ENCODE measurements at regions of chr7 and their contacts with region 1.

Region 1: DNA sequence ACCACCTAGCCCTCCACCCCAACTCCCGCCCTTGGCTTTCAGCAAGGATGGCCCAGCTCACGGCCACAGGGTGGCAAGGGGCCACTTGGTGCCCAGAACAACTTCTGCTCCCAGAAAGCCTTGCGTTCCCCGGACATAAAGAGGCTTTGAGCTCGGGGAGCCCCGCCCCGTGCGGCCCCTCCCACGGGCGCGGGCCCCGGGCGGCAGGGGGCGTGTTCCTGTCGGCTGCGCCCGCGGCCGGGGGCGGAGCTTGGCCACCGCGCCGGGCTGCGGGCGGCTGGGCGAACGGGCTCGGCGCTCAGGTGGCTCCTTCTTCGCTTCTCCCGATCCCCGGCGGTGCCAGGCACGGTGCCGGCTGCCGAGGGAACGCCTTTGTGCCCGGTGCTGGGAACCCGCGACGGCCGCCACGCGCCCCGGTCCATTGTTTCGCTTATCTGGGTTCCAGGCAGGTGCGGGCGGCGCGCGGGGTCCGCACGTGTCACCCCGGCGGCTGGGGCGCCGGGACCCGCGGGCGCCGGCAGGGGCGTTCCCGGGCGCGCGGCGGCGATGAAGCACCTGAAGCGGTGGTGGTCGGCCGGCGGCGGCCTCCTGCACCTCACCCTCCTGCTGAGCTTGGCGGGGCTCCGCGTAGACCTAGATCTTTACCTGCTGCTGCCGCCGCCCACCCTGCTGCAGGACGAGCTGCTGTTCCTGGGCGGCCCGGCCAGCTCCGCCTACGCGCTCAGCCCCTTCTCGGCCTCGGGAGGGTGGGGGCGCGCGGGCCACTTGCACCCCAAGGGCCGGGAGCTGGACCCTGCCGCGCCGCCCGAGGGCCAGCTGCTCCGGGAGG is at the start of gene NFE2L3:
- DNase-seq: peak; percentile 92
- H3K4me3 ChIP-seq: peak within 1 kb of the TSS; percentile 73
- H3K27ac ChIP-seq: peak within 1 kb of the TSS; percentile 30
- H3K4me1 ChIP-seq: peaks cover 44% of the 10 kb centered on the region
- CTCF ChIP-seq: 0 out of 2 replicates have a peak, but pooled peaks have one; percentile 18
- total RNA-seq, gene NFE2L3: 10.7 and 13.3 TPM in 2 replicates

Region 2: DNA sequence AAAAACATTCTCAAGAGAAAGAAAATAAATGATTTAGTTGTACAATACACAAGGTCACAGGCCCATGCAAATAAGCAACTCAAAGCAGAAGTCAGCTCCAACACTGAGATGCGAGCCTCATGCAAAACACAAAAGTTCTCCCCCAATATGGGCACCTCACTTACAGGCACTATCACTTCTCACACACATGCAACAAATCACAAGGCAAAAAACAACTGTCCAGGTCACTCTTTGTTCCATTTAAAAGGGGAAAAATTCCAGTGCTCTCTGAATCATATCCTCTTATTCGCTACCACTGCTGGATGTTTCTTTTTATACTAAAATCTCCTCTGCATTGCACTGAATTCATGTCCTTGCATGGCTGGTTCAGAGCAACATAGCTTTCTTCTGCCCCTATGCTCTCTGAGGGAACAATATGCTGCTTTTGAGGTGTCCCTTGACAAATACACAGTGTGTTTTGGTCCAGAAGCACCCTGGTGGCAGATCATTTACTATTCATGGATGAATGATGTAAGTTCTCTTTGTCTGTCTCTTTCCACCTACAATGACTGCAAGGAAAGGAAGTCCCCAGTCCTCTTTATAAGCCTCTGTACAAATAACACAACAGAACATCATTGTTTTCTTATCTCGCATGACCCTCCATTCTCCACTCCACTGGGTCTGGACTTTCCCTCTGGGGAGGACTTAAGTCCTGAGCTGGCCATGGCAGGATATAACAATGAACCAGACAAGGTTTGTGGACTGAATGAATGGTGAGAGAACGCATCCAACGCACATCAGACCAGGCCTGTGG is 1309.5 kb before region 1 on chr7:
- CTCF ChIA-PET with region 1: no interaction called
- POLR2A ChIA-PET with region 1: no interaction called
- intact Hi-C with region 1: loop called (anchors 5 kb)
- DNase-seq: peak; percentile 71
- H3K4me3 ChIP-seq: peak overlapping the region; percentile 65
- H3K27ac ChIP-seq: peak overlapping the region; percentile 92
- H3K4me1 ChIP-seq: peaks cover 96% of the 10 kb centered on the region
- CTCF ChIP-seq: 0 out of 2 replicates have a peak, but pooled peaks have one; percentile 23

Region 3: DNA sequence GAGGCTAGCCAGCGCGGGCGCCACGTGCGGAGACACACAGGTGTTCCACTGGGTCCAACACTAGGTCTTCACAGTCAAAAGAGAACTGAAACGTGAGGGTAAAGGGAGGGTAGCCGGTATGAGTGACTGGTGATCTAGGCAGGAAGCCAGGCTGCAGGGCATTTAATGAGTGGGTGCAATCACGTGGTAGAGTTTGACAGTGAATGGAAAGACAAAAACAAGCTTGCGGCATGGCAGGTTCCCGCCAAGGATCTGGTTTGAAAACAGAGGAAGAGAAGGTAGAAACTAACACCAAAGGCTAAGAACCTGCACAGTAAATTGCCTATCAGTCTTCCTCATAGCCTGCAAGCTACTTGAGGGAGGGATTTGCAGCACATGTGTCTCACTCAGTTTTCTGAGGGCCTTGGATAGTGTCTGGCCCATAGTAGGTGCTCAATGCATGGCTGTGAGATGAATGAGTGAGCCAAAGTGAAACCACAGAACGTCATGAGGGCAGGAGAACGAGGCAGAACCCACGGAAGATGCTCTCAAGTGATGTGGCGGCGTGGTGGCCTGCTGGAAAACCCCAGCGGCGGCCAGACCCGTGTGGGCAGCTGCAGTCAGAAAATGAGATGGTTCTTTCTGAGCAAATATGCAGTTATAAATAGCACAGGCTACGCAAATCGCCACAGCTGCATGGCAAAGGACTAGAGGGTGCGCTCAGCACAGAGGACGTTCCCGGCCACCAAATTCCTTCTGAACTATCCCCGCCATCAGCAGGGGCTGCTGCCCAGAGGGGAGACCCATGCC is 183.8 kb before region 1 on chr7:
- CTCF ChIA-PET with region 1: no interaction called
- POLR2A ChIA-PET with region 1: interaction called, 3 read pairs
- intact Hi-C with region 1: loop called (anchors 5 kb)
- DNase-seq: peak; percentile 97
- H3K4me3 ChIP-seq: peak overlapping the region; percentile 35
- H3K27ac ChIP-seq: peak overlapping the region; percentile 94
- H3K4me1 ChIP-seq: peaks cover 67% of the 10 kb centered on the region
- CTCF ChIP-seq: no peak; the same call in 1 of the 2 replicates

Region 4: GRCh38 chr7:26167301-26167934 is 15.3 kb after region 1 on chr7:
- CTCF ChIA-PET with region 1: no interaction called
- POLR2A ChIA-PET with region 1: interaction called, 22 read pairs
- intact Hi-C with region 1: no loop called
- DNase-seq: no peak
- H3K4me3 ChIP-seq: no peak overlapping the region
- H3K27ac ChIP-seq: no peak overlapping the region
- H3K4me1 ChIP-seq: peaks cover 13% of the 10 kb centered on the region
- CTCF ChIP-seq: no peak